ENCODE measurements at regions of chr7 and their contacts with region 1.

Region 1: GRCh38 chr7:74289018-74289658 is at the start of gene CLIP2:
- DNase-seq: peak; percentile 72 to 86 (median 85)
- H3K4me3 ChIP-seq: peak within 1 kb of the TSS; percentile 60 to 93 (median 81)
- H3K27ac ChIP-seq: peak within 1 kb of the TSS in 1 of 2 experiments; percentile 43
- H3K4me1 ChIP-seq: peaks cover 5 to 77% (median 49%) of the 10 kb centered on the region in 4 experiments
- H3K27me3 ChIP-seq: no peaks in the 10 kb centered on the region

Region 2: GRCh38 chr7:74083117-74083876 is 205.8 kb before region 1 on chr7 and contains the start of gene LIMK1:
- CTCF ChIA-PET with region 1: no interaction called
- POLR2A ChIA-PET with region 1: no interaction called
- DNase-seq: peak; percentile 71 to 84 (median 83)
- H3K4me3 ChIP-seq: peak within 1 kb of the TSS; percentile 24 to 75 (median 61)
- H3K27ac ChIP-seq: peak within 1 kb of the TSS in 1 of 2 experiments; percentile 54
- H3K4me1 ChIP-seq: peaks cover 0 to 27% (median 18%) of the 10 kb centered on the region in 4 experiments
- H3K27me3 ChIP-seq: no peaks in the 10 kb centered on the region

Region 3: GRCh38 chr7:74272305-74273038 is 16.7 kb before region 1 on chr7:
- CTCF ChIA-PET with region 1: interaction called, 70 read pairs
- POLR2A ChIA-PET with region 1: interaction called, 19 read pairs
- DNase-seq: peak; percentile 70 to 95 (median 95)
- H3K4me3 ChIP-seq: peak overlapping the region in 4 of 7 experiments; percentile 20 to 63 (median 36)
- H3K27ac ChIP-seq: peak overlapping the region in 1 of 2 experiments; percentile 65
- H3K4me1 ChIP-seq: peaks cover 6 to 77% (median 57%) of the 10 kb centered on the region in 4 experiments
- H3K27me3 ChIP-seq: no peaks in the 10 kb centered on the region

Region 4: DNA sequence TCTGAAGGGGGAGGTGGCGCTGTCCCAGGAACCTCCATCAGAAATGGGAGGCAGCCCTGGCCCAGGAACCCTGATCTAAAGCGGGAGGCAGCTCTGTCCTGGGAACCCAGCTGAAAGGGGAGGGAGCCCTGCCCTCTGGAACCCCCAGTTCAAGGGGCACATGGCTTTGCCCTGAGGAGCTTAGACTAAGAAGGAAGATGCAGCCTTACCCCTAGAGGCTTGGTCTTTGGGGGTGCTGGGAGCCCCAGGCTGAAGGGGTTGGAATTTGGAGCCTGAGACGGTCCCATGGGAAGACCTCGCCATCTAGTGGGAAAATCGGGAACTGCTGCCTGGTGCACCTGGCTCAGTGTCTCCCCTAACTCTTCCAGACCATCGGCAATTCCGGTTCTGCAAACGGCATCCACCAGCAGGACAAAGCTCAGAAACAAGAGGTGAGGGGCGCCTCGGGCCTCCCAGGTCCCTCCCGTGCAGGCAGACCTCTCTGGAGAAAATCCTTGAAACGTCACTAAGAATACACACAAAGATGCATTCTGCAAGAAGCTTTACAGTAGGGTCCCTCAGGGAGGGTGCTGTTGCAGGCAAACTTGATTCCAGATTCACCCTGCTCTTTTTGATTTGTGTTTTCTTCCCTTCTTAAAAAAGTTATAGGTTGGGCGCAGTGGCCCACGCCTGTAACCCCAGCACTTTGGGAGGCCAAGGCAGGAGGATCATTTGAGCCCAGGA is 112.2 kb after region 1 on chr7:
- CTCF ChIA-PET with region 1: no interaction called
- POLR2A ChIA-PET with region 1: no interaction called
- DNase-seq: peak; percentile 55 to 78 (median 67)
- H3K4me3 ChIP-seq: no peak overlapping the region
- H3K27ac ChIP-seq: no peak overlapping the region
- H3K4me1 ChIP-seq: no peaks in the 10 kb centered on the region
- H3K27me3 ChIP-seq: no peaks in the 10 kb centered on the region

Measured in common myeloid progenitor, CD34-positive (primary cell).